H1 (cell line): ENCODE measurements at regions of chr5 and their contacts with region 1.

Region 1: GRCh38 chr5:148957591-148958202 is 105.2 kb downstream of the SH3TC2 start:
- DNase-seq: peak in 1 of 2 experiments; percentile 85
- H3K4me3 ChIP-seq: no peak overlapping the region
- H3K27ac ChIP-seq: no peak overlapping the region
- H3K4me1 ChIP-seq: peaks cover 3 to 6% (median 5%) of the 10 kb centered on the region in 4 experiments; a peak in 6 of 7 replicates
- H3K27me3 ChIP-seq: no peaks in the 10 kb centered on the region
- CTCF ChIP-seq: peak; percentile 73 to 87 (median 86)
- EP300 ChIP-seq: no peak
- POLR2A ChIP-seq: no peak
- RAD21 ChIP-seq: peak; percentile 91 to 96

Region 2: DNA sequence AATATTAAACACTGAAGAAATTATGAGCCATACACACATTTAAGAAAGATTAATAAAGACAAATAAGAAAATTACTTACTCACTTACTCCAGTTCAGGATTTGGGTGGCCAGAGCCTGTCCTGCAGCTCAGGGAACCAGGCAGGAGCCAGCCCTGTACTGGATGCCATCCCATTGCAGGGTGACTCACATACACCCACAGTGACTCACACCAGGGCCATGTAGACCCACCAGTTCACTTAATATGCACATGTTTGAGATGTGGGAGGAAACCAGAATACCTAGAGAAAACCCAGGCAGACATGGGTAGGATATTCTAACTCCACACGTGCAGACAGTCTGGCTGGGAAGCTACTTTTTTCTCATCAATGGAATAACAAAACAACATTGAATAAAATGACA is 180.9 kb before region 1 on chr5:
- CTCF ChIA-PET with region 1: interaction called, 17 read pairs
- POLR2A ChIA-PET with region 1: no interaction called
- DNase-seq: no peak
- H3K4me3 ChIP-seq: no peak overlapping the region
- H3K27ac ChIP-seq: no peak overlapping the region
- H3K4me1 ChIP-seq: 0 out of 7 replicates have a peak, but pooled peaks cover 0 to 2% (median 0%) of the 10 kb centered on the region in 4 experiments
- H3K27me3 ChIP-seq: no peaks in the 10 kb centered on the region
- CTCF ChIP-seq: no peak
- EP300 ChIP-seq: no peak
- POLR2A ChIP-seq: no peak
- RAD21 ChIP-seq: no peak

Region 3: DNA sequence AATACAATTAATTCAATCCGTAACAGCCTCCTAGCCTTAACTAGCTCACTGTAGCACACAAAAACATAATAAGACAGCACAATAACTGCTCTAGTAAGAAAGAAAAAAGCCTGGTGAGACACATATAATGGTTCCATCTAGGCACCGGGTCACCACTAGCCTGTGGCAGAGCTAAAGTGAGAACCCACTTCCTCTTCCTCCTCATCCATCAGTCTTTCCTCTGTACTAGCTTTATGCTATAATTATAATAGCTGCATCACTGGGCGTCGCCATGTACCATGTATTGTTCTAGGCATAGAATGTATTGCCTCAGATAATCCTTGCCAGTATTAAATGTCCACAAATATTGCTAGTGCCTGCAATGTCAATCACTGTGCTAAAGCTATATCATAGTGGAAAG is 108.2 kb before region 1 on chr5:
- CTCF ChIA-PET with region 1: interaction called, 21 read pairs
- POLR2A ChIA-PET with region 1: no interaction called
- DNase-seq: no peak
- H3K4me3 ChIP-seq: no peak overlapping the region
- H3K27ac ChIP-seq: no peak overlapping the region
- H3K4me1 ChIP-seq: no peaks in the 10 kb centered on the region
- H3K27me3 ChIP-seq: no peaks in the 10 kb centered on the region
- CTCF ChIP-seq: no peak
- EP300 ChIP-seq: no peak
- POLR2A ChIP-seq: no peak
- RAD21 ChIP-seq: no peak

Region 4: DNA sequence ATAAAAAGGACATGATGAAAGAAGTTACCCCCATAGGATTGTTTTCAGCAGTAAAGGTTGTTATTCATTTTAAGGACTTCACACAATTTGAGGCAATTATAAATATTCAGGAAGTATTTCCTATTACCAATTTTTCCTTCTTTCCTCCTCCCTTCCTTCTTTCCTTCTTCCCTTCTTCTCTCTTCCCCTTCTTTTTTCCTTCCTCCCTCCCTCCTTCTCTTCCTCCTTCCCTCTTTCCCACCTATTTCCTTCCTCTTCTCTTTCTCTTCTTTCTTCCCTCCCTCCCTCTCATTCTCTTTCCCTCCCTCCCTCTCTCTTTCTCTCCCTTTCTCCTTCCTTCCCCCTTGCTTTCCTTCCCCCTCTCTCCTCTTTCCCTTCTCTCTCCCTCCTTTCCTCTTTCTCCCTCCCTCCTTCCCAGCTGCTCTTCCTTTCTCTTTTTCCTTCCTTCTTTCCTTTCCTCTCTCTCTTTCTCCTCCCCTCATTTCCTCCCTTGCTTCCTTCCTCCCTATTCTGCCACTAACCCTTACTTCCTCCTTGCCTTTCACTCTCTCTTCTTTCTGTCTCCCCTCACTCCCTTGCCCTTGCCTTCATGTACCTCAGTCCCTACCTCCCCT is 26.1 kb before region 1 on chr5:
- CTCF ChIA-PET with region 1: interaction called, 31 read pairs
- POLR2A ChIA-PET with region 1: interaction called, 4 read pairs
- DNase-seq: no peak
- H3K4me3 ChIP-seq: no peak overlapping the region
- H3K27ac ChIP-seq: no peak overlapping the region
- H3K4me1 ChIP-seq: peaks cover 0 to 4% (median 0%) of the 10 kb centered on the region in 4 experiments; a peak in 1 of 7 replicates
- H3K27me3 ChIP-seq: no peaks in the 10 kb centered on the region
- CTCF ChIP-seq: no peak
- EP300 ChIP-seq: no peak
- POLR2A ChIP-seq: no peak
- RAD21 ChIP-seq: no peak

Region 5: DNA sequence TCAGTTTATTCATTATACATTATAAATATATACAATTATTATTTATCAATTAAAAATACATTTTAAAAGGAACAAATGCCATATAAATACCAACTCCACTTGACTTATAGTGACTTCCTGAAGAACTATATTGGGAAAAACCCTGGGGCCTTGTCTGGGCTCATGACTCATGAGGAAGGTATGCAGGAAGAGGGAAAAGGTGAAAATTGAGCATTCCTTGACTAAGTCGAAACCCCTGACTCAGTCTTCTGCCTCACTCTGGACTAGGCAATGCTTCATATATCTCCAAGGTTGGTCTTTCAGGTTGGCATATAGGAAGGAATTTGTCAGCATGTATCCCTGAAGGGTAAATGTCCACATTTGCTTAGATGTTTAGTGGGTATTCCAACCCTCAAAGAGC is 26.6 kb after region 1 on chr5:
- CTCF ChIA-PET with region 1: interaction called, 42 read pairs
- POLR2A ChIA-PET with region 1: interaction called, 3 read pairs
- DNase-seq: no peak
- H3K4me3 ChIP-seq: no peak overlapping the region
- H3K27ac ChIP-seq: no peak overlapping the region
- H3K4me1 ChIP-seq: peaks cover 0 to 7% (median 1%) of the 10 kb centered on the region in 4 experiments; a peak in 2 of 7 replicates
- H3K27me3 ChIP-seq: no peaks in the 10 kb centered on the region
- CTCF ChIP-seq: no peak
- EP300 ChIP-seq: no peak
- POLR2A ChIP-seq: no peak
- RAD21 ChIP-seq: no peak

Region 6: GRCh38 chr5:149018909-149019443 is 61.3 kb after region 1 on chr5:
- CTCF ChIA-PET with region 1: interaction called, 14 read pairs
- POLR2A ChIA-PET with region 1: no interaction called
- DNase-seq: no peak
- H3K4me3 ChIP-seq: no peak overlapping the region
- H3K27ac ChIP-seq: no peak overlapping the region
- H3K4me1 ChIP-seq: no peaks in the 10 kb centered on the region
- H3K27me3 ChIP-seq: no peaks in the 10 kb centered on the region
- CTCF ChIP-seq: no peak
- EP300 ChIP-seq: no peak
- POLR2A ChIP-seq: no peak
- RAD21 ChIP-seq: no peak